ENCODE measurements at regions of chr6 and their contacts with region 1.

Region 1: DNA sequence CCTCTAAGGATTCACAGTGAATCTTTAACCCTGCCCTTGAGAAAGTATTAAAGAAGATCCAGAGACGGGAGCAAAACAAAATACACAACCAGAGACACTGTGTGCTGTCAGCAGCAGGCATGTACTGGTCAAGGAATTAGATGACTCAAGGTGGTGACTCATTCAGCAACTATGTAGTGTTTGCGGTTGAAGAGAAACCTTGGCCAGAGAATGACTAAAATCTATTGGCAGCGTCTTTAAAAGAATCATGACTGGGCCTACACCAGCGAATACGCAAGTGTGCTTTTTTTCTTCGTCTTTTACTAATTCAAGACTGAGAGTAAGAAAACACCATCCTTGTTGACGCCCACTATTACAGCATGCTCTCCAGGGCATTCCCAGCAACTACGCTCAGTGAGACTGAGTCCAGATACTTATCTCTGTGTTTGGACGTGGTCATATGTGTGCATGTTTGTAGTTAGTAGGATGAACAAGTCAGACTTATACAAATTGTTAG is 72.4 kb upstream of the BACH2 start:
- DNase-seq: peak; percentile 91
- H3K4me3 ChIP-seq: no peak overlapping the region
- H3K27ac ChIP-seq: peak overlapping the region; percentile 74 to 76
- H3K4me1 ChIP-seq: no peaks in the 10 kb centered on the region
- H3K27me3 ChIP-seq: no peaks in the 10 kb centered on the region
- CTCF ChIP-seq: no peak
- POLR2A ChIP-seq: no peak

Region 2: DNA sequence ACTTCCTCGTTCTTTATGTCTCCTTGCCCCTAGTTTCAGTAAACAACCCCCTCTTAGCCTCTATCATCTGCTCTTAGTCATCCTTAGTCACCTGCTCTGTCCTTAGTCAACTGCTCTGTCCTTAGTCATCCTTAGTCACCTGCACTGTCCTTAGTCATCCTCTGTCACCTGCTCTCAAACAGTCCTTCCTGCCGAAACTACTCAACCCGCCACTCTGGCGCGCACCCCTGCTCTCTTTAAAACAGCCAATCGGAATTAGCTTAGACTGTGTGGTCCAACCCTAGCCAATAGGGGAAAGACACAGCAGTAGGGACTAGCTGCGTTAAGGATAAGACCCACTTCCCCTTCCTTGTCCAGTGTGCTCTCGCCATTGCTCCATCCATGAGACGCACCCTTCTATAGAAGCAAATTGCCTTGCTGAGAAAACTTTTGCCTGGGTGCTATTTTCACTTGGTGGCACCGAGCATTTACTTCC is 146.3 kb before region 1 on chr6:
- intact Hi-C with region 1: loop called (anchors 5 kb)
- DNase-seq: no peak
- H3K4me3 ChIP-seq: no peak overlapping the region
- H3K27ac ChIP-seq: no peak overlapping the region
- H3K4me1 ChIP-seq: peaks cover 13% of the 10 kb centered on the region
- H3K27me3 ChIP-seq: no peaks in the 10 kb centered on the region
- CTCF ChIP-seq: no peak
- POLR2A ChIP-seq: no peak